Psoas muscle (tissue), 8 donors: ENCODE measurements at regions of chr15 and their contacts with region 1.

Region 1: DNA sequence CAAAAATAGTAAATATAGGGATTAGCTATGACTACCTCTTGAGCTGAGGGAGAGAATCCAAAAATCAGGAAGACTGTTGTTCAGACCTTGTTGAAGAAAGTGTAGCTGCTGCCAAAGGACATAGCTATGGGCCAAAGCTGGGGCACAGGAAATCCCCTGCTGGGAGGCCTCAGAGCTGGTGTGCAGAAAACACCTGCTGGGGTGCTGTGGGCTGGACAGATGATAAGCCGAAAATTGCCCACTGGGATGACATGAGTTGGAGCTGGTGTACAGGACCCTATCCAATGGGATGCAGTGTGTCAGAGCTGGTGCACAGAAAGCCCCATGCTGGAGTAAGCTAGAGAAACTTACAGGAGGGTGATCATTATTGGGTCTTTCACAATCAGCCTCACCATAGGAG is 121.9 kb downstream of the NEO1 start:
- DNase-seq: no peak
- ATAC-seq: peak in 1 of 4 donors; percentile 25
- H3K4me3 ChIP-seq: no peak overlapping the region
- H3K27ac ChIP-seq: peak overlapping the region; percentile 2
- H3K4me1 ChIP-seq: peaks cover 24% of the 10 kb centered on the region
- H3K27me3 ChIP-seq: no peaks in the 10 kb centered on the region
- CTCF ChIP-seq: no peak

Region 2: GRCh38 chr15:72796210-72796514 is 378.0 kb before region 1 on chr15:
- intact Hi-C with region 1: no loop called
- DNase-seq: no peak
- ATAC-seq: no peak
- H3K4me3 ChIP-seq: peak overlapping the region; percentile 81
- H3K27ac ChIP-seq: no peak overlapping the region
- H3K4me1 ChIP-seq: peaks cover 3% of the 10 kb centered on the region
- H3K27me3 ChIP-seq: no peaks in the 10 kb centered on the region
- CTCF ChIP-seq: no peak

Region 3: DNA sequence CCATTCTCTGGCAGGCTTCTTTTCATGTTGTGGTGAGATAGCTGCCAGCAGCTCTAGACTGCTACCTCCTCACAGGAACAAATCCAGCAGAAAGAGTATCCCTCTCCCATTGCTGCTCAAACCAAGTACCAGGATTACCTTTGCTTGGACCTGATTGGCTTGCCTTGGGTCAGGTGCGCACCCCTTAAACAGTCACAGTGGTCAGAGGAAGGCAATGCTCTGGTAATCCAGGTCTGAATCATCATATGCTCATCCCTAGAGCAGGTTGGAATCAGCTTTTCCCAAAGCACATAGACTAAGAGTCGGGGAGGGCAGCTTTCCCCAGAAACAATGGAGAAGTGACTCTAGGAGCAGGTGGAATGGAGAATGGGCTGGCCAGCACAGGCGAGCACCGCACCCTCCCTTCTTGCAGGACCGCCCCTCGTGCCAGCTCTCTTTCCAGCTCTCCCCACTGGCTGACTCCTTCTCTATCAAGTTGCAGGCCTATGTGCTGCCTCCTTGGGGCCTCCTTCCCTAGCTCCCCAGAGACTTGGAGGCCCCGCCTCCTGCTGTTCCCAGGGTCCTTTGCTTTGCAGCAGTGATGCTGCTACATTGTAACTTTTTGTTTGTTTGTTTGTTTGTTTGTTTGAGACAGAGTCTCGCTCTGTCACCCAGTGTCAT is 360.7 kb before region 1 on chr15:
- intact Hi-C with region 1: no loop called
- DNase-seq: no peak
- ATAC-seq: peak in 1 of 4 donors; percentile 36
- H3K4me3 ChIP-seq: no peak overlapping the region
- H3K27ac ChIP-seq: no peak overlapping the region
- H3K4me1 ChIP-seq: no peaks in the 10 kb centered on the region
- H3K27me3 ChIP-seq: no peaks in the 10 kb centered on the region
- CTCF ChIP-seq: no peak

Region 4: GRCh38 chr15:73051811-73052678 is 122.1 kb before region 1 on chr15 and contains the start of gene NEO1:
- intact Hi-C with region 1: no loop called
- DNase-seq: peak; percentile 89 to 95
- ATAC-seq: peak; percentile 91 to 95 (median 94)
- H3K4me3 ChIP-seq: peak within 1 kb of the TSS; percentile 79
- H3K27ac ChIP-seq: peak within 1 kb of the TSS; percentile 90
- H3K4me1 ChIP-seq: peaks cover 52% of the 10 kb centered on the region
- H3K27me3 ChIP-seq: no peaks in the 10 kb centered on the region
- CTCF ChIP-seq: no peak
- total RNA-seq, gene NEO1: 22.5 to 33.3 (median 26.0) TPM

Region 5: DNA sequence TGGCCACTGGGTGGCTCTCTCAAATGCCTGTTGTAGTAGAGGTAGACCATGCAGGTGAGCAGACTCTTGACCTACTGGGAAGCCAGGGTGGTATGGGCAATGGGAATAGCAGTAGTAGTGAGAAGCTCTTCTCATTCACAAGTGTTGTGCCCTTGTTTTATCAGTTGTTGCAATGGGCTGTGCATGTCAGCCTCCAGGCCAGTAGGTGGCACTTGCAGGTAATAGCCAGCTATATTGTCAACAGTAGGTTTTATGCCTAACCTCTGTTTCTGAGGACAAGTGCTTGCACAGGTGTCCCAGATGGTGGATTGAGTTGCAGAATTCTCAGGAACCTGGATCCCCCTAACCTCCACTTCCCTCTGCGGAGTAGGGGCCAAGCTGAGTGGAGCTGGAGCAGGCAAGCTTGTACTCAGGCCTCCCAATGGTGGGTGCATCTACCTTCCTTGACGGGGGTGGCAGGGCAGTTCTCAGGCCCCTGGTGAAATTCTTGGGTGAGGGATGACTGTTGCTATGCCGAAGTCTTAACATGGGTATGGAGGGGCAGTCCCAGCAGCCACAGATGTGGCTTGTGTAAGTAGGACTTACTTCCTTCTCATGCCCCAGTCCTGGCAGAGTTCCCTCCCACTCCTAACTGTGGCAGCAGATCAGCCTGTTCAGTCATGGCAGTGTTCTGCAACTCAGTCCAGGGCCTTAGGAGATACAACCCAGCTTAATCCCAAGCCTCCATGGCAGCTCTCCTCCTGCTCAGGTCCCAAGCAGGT is 17.6 kb before region 1 on chr15:
- intact Hi-C with region 1: loop called in 1 of 2 experiments (anchors 2 kb)
- DNase-seq: no peak
- ATAC-seq: no peak
- H3K4me3 ChIP-seq: no peak overlapping the region
- H3K27ac ChIP-seq: no peak overlapping the region
- H3K4me1 ChIP-seq: peaks cover 28% of the 10 kb centered on the region
- H3K27me3 ChIP-seq: no peaks in the 10 kb centered on the region
- CTCF ChIP-seq: no peak

Region 6: DNA sequence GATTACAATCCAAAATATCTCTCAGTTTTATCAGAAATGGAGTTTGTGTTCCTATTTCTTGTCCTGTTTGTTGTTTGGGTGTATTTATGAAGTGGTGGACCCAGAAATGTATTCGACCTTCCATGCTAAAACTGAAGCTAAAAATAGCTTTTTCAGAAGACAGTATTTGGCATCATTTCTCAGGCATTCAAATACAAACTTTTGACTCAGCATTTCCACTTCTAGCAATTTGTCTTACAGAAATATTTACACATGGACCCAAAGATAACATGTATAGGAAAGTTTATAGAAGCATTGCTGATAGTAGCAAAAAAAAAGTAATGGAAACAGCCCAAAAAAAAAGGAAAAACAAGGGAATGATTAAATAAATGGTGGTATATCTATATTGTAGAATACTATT is 38.3 kb after region 1 on chr15:
- intact Hi-C with region 1: no loop called
- DNase-seq: no peak
- ATAC-seq: no peak
- H3K4me3 ChIP-seq: no peak overlapping the region
- H3K27ac ChIP-seq: no peak overlapping the region
- H3K4me1 ChIP-seq: peaks cover 10% of the 10 kb centered on the region
- H3K27me3 ChIP-seq: no peaks in the 10 kb centered on the region
- CTCF ChIP-seq: no peak